ENCODE measurements at regions of chr7 and their contacts with region 1.

Region 1: GRCh38 chr7:74269757-74270277 is 15.6 kb upstream of the RFC2 start:
- DNase-seq: no peak
- H3K4me3 ChIP-seq: peak overlapping the region; percentile 43 to 73 (median 61)
- H3K27ac ChIP-seq: no peak overlapping the region
- H3K4me1 ChIP-seq: no peaks in the 10 kb centered on the region
- H3K27me3 ChIP-seq: no peaks in the 10 kb centered on the region
- CTCF ChIP-seq: no peak
- POLR2A ChIP-seq: no peak

Region 2: GRCh38 chr7:74284781-74285259 is 15.0 kb after region 1 on chr7:
- intact Hi-C with region 1: no loop called
- DNase-seq: no peak
- H3K4me3 ChIP-seq: no peak overlapping the region
- H3K27ac ChIP-seq: no peak overlapping the region
- H3K4me1 ChIP-seq: peaks cover 0 to 3% of the 10 kb centered on the region in 2 donors
- H3K27me3 ChIP-seq: no peaks in the 10 kb centered on the region
- CTCF ChIP-seq: no peak
- POLR2A ChIP-seq: no peak

Region 3: GRCh38 chr7:74429153-74429747 is 159.4 kb after region 1 on chr7:
- intact Hi-C with region 1: no loop called
- DNase-seq: no peak
- H3K4me3 ChIP-seq: no peak overlapping the region
- H3K27ac ChIP-seq: no peak overlapping the region
- H3K4me1 ChIP-seq: no peaks in the 10 kb centered on the region
- H3K27me3 ChIP-seq: no peaks in the 10 kb centered on the region
- CTCF ChIP-seq: no peak
- POLR2A ChIP-seq: no peak

Region 4: DNA sequence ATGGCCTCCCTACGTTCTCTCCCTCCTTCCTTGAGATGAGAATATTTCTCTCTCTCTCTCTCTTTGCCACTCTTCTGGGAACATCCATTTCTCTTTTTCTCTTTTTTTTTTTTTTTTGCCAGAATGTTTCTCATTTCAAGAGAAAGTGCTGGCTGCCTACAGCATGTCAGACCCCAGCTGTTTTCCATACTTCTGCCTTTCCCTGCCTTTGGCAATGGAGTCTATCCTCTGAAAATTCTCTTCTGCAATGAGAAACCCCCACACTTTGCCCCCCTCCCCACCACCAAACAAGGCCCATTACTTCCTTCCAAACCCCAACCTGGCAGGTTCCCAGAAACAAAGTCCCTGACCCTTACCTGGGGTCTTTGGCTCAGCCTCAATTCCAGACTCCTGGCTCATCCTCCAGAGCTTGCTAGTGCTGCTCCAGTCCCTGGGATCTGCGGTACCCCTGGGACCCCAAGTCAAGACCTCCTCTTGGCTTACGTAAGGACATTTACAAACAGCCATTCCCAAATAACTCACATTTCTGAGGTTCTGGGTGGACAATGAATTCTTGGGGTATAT is 1519.6 kb after region 1 on chr7:
- intact Hi-C with region 1: loop called (anchors 10 kb)
- DNase-seq: no peak
- H3K4me3 ChIP-seq: no peak overlapping the region
- H3K27ac ChIP-seq: no peak overlapping the region
- H3K4me1 ChIP-seq: no peaks in the 10 kb centered on the region
- H3K27me3 ChIP-seq: no peaks in the 10 kb centered on the region
- CTCF ChIP-seq: no peak
- POLR2A ChIP-seq: no peak